Activated CD4-positive, alpha-beta T cell treated with anti-CD3 and anti-CD28 coated beads for 36 hours (primary cell): ENCODE measurements at regions of chr18 and their contacts with region 1.

Region 1: DNA sequence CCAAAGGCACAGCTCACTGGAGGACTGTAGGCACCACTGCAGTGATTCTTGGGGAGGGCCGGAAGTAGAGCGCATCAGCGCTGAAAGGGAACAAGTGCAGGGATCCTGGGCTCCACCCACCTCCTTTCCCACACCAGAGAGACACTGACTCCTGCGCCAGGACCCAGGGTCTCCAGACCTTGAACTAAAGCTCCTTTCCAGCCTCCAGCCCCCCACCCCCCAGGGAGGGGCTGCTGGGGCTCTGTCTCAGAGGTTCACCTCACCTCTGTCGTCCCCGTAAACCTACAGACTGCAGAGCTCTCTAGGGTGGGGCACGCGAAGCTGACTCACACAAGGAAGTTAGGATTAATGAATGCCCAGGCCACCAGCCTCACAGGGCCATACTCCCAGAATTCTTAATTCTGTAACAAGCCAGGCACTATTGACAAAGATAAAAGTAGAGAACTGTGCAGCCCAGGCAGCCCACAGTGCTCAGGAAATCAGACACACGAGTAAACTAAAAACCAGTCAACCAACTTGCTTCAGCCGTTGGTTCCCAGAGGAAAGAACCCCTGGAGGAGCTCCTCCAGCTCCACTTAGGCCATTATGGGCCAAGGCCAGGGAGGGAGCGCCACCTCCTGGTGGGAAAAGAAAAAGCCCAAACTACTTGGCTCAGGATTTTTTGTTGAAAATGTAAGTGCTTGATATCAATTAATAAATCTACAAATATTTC is 45.1 kb upstream of the ACAA2 start:
- DNase-seq: peak; percentile 76
- ATAC-seq: no peak
- H3K4me3 Mint-ChIP-seq: no peak overlapping the region
- H3K27ac Mint-ChIP-seq: no peak overlapping the region
- H3K4me1 Mint-ChIP-seq: no peaks in the 10 kb centered on the region
- H3K27me3 Mint-ChIP-seq: no peaks in the 10 kb centered on the region

Region 2: GRCh38 chr18:49510393-49511115 is 347.9 kb before region 1 on chr18:
- CTCF ChIA-PET with region 1: interaction called, 107 read pairs
- POLR2A ChIA-PET with region 1: no interaction called
- intact Hi-C with region 1: loop called (anchors 1 kb)
- DNase-seq: peak; percentile 70
- ATAC-seq: peak; percentile 61
- H3K4me3 Mint-ChIP-seq: no peak overlapping the region
- H3K27ac Mint-ChIP-seq: no peak overlapping the region
- H3K4me1 Mint-ChIP-seq: no peaks in the 10 kb centered on the region
- H3K27me3 Mint-ChIP-seq: peaks cover 10% of the 10 kb centered on the region

Region 3: DNA sequence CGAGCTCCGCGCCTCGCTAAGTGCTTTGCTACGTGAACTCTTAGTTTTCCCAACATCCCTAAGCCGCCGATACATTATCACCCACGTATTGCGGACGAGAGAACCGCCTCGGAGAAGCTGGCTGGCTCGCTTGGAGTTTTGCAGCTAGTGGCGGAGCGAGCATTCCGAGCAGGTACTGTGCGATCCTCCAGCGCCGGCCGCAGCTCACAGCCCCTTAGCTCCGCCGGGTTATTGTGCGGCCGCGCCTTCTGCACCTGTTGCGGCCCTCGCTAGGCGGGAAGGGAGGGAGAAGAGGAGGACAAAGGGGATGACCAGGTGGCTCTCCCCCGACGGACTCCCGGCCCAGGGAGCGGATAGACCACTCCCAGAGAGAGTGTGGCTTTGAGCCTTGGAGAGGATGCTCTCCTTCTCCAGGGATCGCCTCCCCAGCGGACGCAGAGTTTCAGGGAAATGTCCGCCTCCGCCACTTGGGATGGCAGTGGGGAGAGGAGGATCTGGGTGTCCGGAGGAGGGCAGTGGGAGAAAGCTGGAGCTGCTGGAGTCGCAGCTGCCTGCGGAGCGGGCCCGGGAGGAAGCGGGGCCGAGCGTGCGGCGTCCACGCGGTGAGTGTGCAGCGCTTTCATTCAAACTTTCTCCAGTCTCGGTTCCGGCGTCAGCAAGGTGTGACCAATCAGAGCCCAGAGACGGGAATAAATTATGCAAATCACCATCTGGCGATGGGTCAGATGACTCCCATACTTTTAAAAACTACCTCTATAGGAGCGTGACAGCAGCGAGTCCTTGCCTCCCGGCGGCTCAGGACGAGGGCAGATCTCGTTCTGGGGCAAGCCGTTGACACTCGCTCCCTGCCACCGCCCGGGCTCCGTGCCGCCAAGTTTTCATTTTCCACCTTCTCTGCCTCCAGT is 296.9 kb before region 1 on chr18 and contains the start of gene LIPG:
- CTCF ChIA-PET with region 1: interaction called, 14 read pairs
- POLR2A ChIA-PET with region 1: no interaction called
- intact Hi-C with region 1: loop called (anchors 1 to 2 kb)
- DNase-seq: peak; percentile 79
- ATAC-seq: peak; percentile 86
- H3K4me3 Mint-ChIP-seq: peak within 1 kb of the TSS; percentile 63
- H3K27ac Mint-ChIP-seq: peak within 1 kb of the TSS; percentile 49
- H3K4me1 Mint-ChIP-seq: peaks cover 32% of the 10 kb centered on the region
- H3K27me3 Mint-ChIP-seq: peaks cover 59% of the 10 kb centered on the region
- total RNA-seq, gene LIPG: 0.71 to 0.79 TPM

Region 4: GRCh38 chr18:49630246-49630699 is 228.2 kb before region 1 on chr18:
- CTCF ChIA-PET with region 1: no interaction called
- POLR2A ChIA-PET with region 1: no interaction called
- intact Hi-C with region 1: loop called in 1 of 2 experiments (anchors 10 kb)
- DNase-seq: no peak
- ATAC-seq: no peak
- H3K4me3 Mint-ChIP-seq: no peak overlapping the region
- H3K27ac Mint-ChIP-seq: no peak overlapping the region
- H3K4me1 Mint-ChIP-seq: no peaks in the 10 kb centered on the region
- H3K27me3 Mint-ChIP-seq: peaks cover 2% of the 10 kb centered on the region

Region 5: GRCh38 chr18:49784427-49785185 is 73.9 kb before region 1 on chr18:
- CTCF ChIA-PET with region 1: interaction called, 19 read pairs
- POLR2A ChIA-PET with region 1: no interaction called
- intact Hi-C with region 1: no loop called
- DNase-seq: no peak
- ATAC-seq: no peak
- H3K4me3 Mint-ChIP-seq: no peak overlapping the region
- H3K27ac Mint-ChIP-seq: no peak overlapping the region
- H3K4me1 Mint-ChIP-seq: peaks cover 40% of the 10 kb centered on the region
- H3K27me3 Mint-ChIP-seq: no peaks in the 10 kb centered on the region

Region 6: DNA sequence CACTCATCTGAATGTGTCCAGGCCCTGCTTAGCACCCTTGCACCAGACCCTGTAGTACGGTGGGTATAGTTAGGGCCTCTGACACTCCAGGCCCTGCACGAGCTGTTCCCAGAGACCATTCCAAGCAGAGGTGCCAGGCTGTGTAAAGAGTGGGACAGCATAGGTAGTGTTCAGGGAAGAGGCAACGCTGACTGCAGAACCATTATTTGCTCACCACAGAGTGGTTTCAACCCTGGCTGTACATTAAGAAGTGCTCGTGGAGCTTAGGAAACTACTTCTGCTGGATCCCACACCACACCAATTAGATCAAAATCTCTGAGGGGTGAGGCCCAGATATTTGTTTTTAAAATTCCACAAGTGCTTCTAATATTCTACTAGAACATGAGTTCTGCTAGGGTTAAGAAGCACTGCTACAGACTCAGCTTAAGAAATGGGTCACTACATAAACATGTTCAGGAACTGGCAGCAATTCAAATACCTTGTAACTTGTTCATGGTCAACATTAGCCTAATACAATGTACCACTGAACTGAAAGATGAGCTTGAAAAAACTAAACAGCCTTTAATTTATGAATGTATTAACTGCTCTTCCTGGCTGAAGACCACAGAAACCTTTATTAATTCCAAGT is 153.5 kb after region 1 on chr18:
- CTCF ChIA-PET with region 1: no interaction called
- POLR2A ChIA-PET with region 1: no interaction called
- intact Hi-C with region 1: no loop called
- DNase-seq: no peak
- ATAC-seq: no peak
- H3K4me3 Mint-ChIP-seq: no peak overlapping the region
- H3K27ac Mint-ChIP-seq: no peak overlapping the region
- H3K4me1 Mint-ChIP-seq: no peaks in the 10 kb centered on the region
- H3K27me3 Mint-ChIP-seq: peaks cover 5% of the 10 kb centered on the region